ENCODE measurements at regions of chrX and their contacts with region 1.

Region 1: GRCh38 chrX:38654302-38654701 is 93.0 kb downstream of the TSPAN7 start:
- DNase-seq: peak in 1 of 2 donors; percentile 17
- ATAC-seq: peak in 5 of 8 donors; percentile 52 to 77 (median 60)
- H3K4me3 ChIP-seq: no peak overlapping the region
- H3K27ac ChIP-seq: no peak overlapping the region
- H3K4me1 ChIP-seq: peaks cover 0 to 13% (median 0%) of the 10 kb centered on the region in 9 donors
- H3K27me3 ChIP-seq: peaks cover 0 to 17% (median 0%) of the 10 kb centered on the region in 7 donors
- CTCF ChIP-seq: peak; percentile 22 to 60 (median 49)

Region 2: GRCh38 chrX:38214551-38215531 is 439.5 kb before region 1 on chrX:
- intact Hi-C with region 1: no loop called
- DNase-seq: no peak
- ATAC-seq: peak in 3 of 8 donors; percentile 37 to 78 (median 56)
- H3K4me3 ChIP-seq: no peak overlapping the region
- H3K27ac ChIP-seq: peak overlapping the region in 1 of 10 donors; percentile 15
- H3K4me1 ChIP-seq: peaks cover 0 to 16% (median 7%) of the 10 kb centered on the region in 9 donors
- H3K27me3 ChIP-seq: peaks cover 0 to 25% (median 0%) of the 10 kb centered on the region in 7 donors
- CTCF ChIP-seq: no peak

Region 3: DNA sequence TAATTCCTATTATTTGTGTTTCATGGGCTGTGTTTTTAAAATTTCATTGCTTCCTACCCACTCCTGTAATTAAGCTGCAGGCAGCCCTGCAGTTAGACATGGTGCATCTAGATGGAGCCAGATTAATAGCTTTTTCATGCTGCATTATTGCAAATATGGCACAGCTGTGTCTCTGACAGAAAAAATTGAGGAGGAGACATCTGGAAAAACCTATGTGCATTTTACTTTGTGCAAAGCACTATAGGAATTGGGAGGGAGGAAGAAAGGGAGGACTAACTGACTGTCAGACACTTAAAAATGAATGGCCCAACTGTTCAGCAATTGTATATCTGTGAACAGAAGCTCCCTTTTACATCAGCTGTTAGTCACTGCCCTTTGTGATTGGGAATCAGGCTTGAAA is 318.9 kb before region 1 on chrX:
- intact Hi-C with region 1: loop called in 3 of 10 experiments (anchors 10 kb)
- DNase-seq: no peak
- ATAC-seq: no peak
- H3K4me3 ChIP-seq: no peak overlapping the region
- H3K27ac ChIP-seq: no peak overlapping the region
- H3K4me1 ChIP-seq: peaks cover 0 to 8% (median 0%) of the 10 kb centered on the region in 9 donors
- H3K27me3 ChIP-seq: peaks cover 0 to 7% (median 0%) of the 10 kb centered on the region in 7 donors
- CTCF ChIP-seq: peak in 8 of 9 donors; percentile 16 to 53 (median 28)

Region 4: DNA sequence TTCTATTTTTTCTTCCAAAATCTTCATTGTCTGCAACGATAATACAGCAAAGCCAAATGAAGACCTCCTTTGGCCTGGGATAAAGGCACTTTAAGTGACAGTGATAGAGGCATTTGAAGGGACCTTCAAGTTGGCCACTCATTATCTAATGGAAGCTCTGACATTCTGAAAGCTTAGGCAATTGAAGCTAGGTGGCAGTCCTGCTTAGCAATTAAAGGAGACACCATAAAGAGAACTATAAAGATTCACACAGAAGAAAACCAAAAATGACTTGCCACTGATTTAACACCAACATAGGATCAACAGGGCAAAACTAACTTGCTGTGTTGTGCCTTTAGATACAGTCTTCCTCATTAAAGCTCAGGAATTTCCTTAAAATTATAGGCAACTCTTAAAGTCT is 196.2 kb before region 1 on chrX:
- intact Hi-C with region 1: loop called in 4 of 10 experiments (anchors 5 to 10 kb)
- DNase-seq: no peak
- ATAC-seq: no peak
- H3K4me3 ChIP-seq: no peak overlapping the region
- H3K27ac ChIP-seq: no peak overlapping the region
- H3K4me1 ChIP-seq: no peaks in the 10 kb centered on the region
- H3K27me3 ChIP-seq: peaks cover 0 to 25% (median 0%) of the 10 kb centered on the region in 7 donors
- CTCF ChIP-seq: peak in 5 of 9 donors; percentile 17 to 42 (median 24)

Region 5: GRCh38 chrX:38468563-38469157 is 185.6 kb before region 1 on chrX:
- intact Hi-C with region 1: loop called in 2 of 10 experiments (anchors 10 kb)
- DNase-seq: no peak
- ATAC-seq: no peak
- H3K4me3 ChIP-seq: no peak overlapping the region
- H3K27ac ChIP-seq: no peak overlapping the region
- H3K4me1 ChIP-seq: no peaks in the 10 kb centered on the region
- H3K27me3 ChIP-seq: no peaks in the 10 kb centered on the region
- CTCF ChIP-seq: no peak

Region 6: DNA sequence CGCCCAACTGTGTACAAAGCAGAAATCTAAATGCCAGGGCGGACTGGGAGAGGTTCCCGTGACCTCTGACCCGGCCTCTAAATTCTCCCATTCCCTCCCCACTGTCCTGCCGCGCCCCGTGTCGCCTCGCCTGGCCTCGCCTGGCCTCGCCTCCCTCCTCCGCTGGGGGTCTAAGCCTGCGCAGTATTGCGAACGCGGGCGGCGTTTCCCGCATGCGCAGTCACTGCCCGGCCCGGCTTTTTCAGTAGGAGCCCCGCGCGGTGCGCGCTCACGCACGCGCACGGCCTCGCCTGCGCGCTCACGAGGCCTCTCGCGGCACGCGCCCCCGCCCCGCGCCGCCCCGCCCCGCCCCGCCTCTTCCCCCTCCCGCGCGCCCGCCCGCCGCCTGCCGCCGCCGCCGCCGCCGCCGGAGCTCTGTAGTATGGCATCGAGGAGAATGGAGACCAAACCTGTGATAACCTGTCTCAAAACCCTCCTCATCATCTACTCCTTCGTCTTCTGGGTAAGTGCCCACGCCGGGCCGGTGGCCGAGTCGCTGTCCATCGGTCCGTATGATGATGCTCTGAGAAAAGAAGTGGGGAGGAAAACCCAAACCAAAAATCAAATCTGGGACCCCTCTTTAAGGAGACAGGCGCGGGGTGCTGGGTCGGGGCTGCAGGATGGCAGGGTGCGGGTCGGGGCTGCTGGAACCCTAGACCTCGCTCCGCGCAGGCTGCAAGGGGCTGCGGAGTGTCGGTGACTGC is 93.0 kb before region 1 on chrX and contains the start of gene TSPAN7:
- intact Hi-C with region 1: loop called in 2 of 10 experiments (anchors 5 to 10 kb)
- DNase-seq: peak; percentile 82 to 84
- ATAC-seq: peak; percentile 93 to 96 (median 95)
- H3K4me3 ChIP-seq: peak within 1 kb of the TSS; percentile 47 to 65 (median 59)
- H3K27ac ChIP-seq: peak within 1 kb of the TSS in 7 of 10 donors; percentile 35 to 69 (median 48)
- H3K4me1 ChIP-seq: peaks cover 0 to 16% (median 0%) of the 10 kb centered on the region in 9 donors
- H3K27me3 ChIP-seq: peaks cover 0 to 9% (median 0%) of the 10 kb centered on the region in 7 donors
- CTCF ChIP-seq: no peak
- total RNA-seq, gene TSPAN7: 11.1 to 45.1 (median 19.1) TPM

Region 7: DNA sequence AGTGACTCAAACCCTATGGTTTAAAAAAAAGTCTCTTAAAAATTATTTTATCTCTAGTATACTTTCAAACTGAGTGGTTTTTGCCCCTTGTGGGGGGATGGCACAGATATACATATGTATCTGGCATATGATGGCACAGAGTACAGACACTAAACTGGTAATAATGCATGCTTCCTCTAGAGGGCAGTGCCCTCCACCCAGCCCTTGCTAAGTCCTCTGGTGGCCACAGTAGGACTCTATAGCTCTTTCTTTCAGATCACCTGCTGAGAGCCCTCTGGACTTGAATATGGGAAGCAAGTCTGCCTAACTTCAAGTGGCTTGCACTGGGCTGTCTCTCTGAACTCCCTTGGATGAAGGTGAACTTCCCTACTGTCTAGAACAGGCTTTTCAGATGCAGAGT is 26.6 kb before region 1 on chrX:
- intact Hi-C with region 1: no loop called
- DNase-seq: no peak
- ATAC-seq: no peak
- H3K4me3 ChIP-seq: no peak overlapping the region
- H3K27ac ChIP-seq: no peak overlapping the region
- H3K4me1 ChIP-seq: peaks cover 0 to 9% (median 0%) of the 10 kb centered on the region in 9 donors
- H3K27me3 ChIP-seq: peaks cover 0 to 18% (median 0%) of the 10 kb centered on the region in 7 donors
- CTCF ChIP-seq: peak in 8 of 9 donors; percentile 14 to 63 (median 40)

Measured in heart right ventricle (tissue), 16 donors.